A549 (cell line): ENCODE measurements at regions of chr12 and their contacts with region 1.

Region 1: DNA sequence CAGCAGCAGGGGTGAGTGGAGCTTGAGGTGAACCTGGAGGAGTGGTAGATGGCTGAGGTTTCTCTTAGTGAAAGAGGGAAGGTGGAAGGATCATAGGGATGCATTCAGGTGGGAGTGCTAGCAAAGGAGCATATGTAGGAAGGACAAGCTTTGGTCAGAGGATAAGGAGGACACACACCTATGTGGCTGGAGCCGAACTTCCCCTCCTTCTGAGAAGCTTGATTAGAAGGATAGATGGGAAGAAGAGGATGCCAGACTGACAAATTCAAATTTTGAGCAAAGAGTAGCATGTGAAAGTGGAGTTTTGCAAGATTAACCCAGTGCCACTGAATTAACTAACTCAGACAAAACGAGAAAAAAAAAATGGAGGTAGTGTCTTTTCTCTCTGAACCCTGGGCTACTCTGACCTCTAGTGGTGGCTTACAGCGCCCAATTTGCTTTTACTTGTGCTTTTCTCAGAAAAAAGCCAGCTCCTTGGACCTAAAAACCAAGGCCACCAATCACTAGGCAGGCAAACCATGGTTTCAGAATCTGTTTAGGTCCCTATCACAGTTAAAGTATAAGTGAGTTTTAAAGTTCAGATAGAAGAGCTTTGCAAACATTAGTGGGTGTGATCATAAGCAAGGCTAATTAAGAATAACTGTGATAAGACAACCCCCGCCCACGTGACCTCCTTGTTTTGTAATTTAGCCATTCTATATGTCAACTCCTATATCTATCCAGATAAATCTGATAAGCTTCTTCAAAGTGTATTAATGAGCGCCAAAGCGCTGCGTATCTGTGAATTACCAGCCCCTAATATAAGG is 15.5 kb downstream of the EMP1 start:
- DNase-seq: peak; percentile 70 to 78
- ATAC-seq: peak; percentile 55 to 57; a peak in 5 of 6 replicates
- H3K4me3 ChIP-seq: no peak overlapping the region
- H3K27ac ChIP-seq: peak overlapping the region; percentile 71 to 83
- H3K4me1 ChIP-seq: peaks cover 41% of the 10 kb centered on the region
- CTCF ChIP-seq: peak; percentile 96
- EP300 ChIP-seq: no peak
- POLR2A ChIP-seq: no peak
- RAD21 ChIP-seq: peak; percentile 96 to 97

Region 2: DNA sequence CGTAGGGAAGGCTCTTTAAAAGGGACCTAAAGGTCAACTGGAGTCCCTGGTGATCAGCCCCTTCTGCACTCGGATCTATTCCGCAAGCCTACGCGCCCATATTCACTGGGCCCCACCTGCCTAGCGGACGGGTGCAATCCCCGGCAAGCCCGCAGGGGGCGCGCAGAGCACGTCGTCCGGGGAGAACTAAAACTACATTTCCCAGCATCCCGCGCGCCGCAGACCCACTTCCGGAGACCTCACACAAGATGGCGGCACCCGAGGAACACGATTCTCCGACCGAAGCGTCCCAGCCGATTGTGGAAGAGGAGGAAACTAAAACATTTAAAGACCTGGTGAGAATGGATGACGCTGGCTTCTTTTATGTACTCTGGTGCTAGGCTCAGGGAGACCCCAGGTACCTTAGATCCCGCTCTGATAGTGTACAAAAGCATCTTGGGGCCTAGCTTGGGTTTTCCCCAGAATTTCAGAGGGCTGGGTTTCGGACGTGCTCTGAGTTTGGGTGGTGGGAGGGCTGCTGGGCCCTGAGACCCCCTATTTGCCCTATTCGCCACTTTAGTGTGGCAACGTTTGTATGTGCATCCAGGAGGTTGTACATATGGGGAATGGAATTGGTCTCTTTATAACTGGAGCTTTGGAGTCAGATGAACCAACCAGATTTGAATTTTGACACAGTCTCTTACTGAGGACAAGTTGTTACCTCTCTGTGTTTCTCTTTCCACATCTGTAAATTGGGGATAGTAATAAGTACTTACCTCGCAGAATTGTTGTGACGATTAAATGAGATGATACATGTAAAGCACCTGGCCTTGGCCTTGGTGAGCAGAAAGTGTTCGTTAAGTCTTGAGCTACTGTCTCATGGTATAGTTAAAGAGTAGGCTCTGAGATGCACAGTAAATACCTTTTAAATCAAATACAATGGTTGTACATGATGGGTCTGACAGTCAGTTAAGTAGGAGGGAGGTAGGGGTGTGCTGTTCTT is 398.7 kb before region 1 on chr12 and contains the start of gene DDX47:
- CTCF ChIA-PET with region 1: interaction called, 11 read pairs
- POLR2A ChIA-PET with region 1: no interaction called
- DNase-seq: peak; percentile 87 to 95
- ATAC-seq: peak; percentile 93 to 94
- H3K4me3 ChIP-seq: peak within 1 kb of the TSS; percentile 92
- H3K27ac ChIP-seq: peak within 1 kb of the TSS; percentile 90 to 92
- H3K4me1 ChIP-seq: peaks cover 43% of the 10 kb centered on the region
- CTCF ChIP-seq: peak; percentile 81
- EP300 ChIP-seq: no peak
- POLR2A ChIP-seq: peak; percentile 46
- RAD21 ChIP-seq: peak; percentile 60 to 72
- polyA plus RNA-seq, gene DDX47: 118 and 144 TPM in 2 replicates

Region 3: GRCh38 chr12:12999271-12999958 is 212.6 kb before region 1 on chr12:
- CTCF ChIA-PET with region 1: interaction called, 11 read pairs
- POLR2A ChIA-PET with region 1: interaction called, 4 read pairs
- DNase-seq: peak in 1 of 2 experiments; percentile 37
- ATAC-seq: peak; percentile 30 to 31
- H3K4me3 ChIP-seq: peak overlapping the region; percentile 88
- H3K27ac ChIP-seq: peak overlapping the region; percentile 81 to 96
- H3K4me1 ChIP-seq: peaks cover 15% of the 10 kb centered on the region
- CTCF ChIP-seq: no peak
- EP300 ChIP-seq: no peak
- POLR2A ChIP-seq: no peak
- RAD21 ChIP-seq: no peak

Region 4: DNA sequence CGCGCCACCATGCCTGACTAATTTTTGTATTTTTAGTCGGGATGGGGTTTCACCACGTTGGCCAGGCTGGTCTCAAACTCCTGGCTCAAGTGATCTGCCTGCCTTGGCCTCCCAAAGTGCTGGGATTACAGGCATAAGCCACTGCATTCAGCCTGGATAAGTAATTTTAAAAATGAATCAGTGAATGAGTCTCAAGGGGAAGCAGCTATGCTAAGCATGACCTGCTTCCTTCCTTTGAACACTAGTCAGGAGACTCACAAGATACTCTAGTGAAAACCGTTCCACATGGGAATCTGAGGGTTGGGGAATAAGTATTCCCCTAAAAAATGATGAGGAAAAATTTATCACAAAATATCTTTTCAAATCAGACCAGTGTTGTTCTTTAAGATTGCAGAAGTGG is 178.6 kb before region 1 on chr12:
- CTCF ChIA-PET with region 1: interaction called, 119 read pairs
- POLR2A ChIA-PET with region 1: no interaction called
- DNase-seq: no peak
- ATAC-seq: no peak
- H3K4me3 ChIP-seq: no peak overlapping the region
- H3K27ac ChIP-seq: no peak overlapping the region
- H3K4me1 ChIP-seq: no peaks in the 10 kb centered on the region
- CTCF ChIP-seq: no peak
- EP300 ChIP-seq: no peak
- POLR2A ChIP-seq: no peak
- RAD21 ChIP-seq: no peak

Region 5: GRCh38 chr12:13085968-13086686 is 125.9 kb before region 1 on chr12:
- CTCF ChIA-PET with region 1: interaction called, 33 read pairs
- POLR2A ChIA-PET with region 1: no interaction called
- DNase-seq: no peak
- ATAC-seq: no peak
- H3K4me3 ChIP-seq: no peak overlapping the region
- H3K27ac ChIP-seq: no peak overlapping the region
- H3K4me1 ChIP-seq: no peaks in the 10 kb centered on the region
- CTCF ChIP-seq: no peak
- EP300 ChIP-seq: no peak
- POLR2A ChIP-seq: no peak
- RAD21 ChIP-seq: no peak

Region 6: GRCh38 chr12:13187399-13187798 is 24.7 kb before region 1 on chr12:
- CTCF ChIA-PET with region 1: interaction called, 19 read pairs
- POLR2A ChIA-PET with region 1: no interaction called
- DNase-seq: peak; percentile 51 to 65
- ATAC-seq: peak; percentile 82 to 85
- H3K4me3 ChIP-seq: no peak overlapping the region
- H3K27ac ChIP-seq: peak overlapping the region; percentile 19 to 33; a peak in 1 of 6 replicates
- H3K4me1 ChIP-seq: peaks cover 18% of the 10 kb centered on the region
- CTCF ChIP-seq: no peak
- EP300 ChIP-seq: no peak
- POLR2A ChIP-seq: no peak
- RAD21 ChIP-seq: no peak

Region 7: DNA sequence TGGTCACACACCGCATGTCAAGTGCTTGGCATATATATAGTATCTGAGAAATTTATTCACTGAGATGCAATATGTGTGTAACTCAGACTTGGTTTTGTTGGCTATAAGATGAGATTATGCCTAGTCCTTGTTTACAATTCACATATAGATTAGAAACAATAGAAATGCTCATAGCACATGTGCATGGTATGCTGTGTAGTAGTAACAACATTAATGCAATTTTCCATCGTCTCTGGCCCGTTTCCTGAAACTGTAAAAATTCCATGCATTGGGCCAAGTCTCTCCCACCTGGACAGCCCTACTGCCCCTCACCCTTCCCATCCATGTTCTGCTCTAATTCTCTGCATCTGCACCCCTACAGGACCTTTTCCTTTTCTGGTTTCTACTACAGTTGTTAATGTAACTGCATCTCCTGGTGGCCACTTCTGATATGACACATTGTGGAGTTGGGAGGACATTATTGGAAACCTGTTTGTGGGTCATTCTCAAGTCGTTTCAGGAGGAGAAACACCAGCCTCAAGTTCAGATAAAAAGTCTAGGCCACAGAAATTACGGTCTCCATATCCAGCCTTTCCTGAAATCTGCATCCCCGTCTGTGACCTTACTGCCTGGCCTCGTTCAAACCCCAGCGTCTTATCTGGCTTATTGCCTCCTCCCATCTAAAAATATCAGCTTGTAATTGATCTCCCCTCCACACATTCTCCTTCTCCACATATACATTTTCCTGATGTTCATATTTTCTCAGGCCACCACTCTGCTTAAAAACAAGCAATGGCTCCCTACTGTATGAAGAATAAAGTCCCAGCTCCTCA is 22.0 kb after region 1 on chr12:
- CTCF ChIA-PET with region 1: interaction called, 21 read pairs
- POLR2A ChIA-PET with region 1: no interaction called
- DNase-seq: peak; percentile 72 to 73
- ATAC-seq: peak; percentile 80 to 91
- H3K4me3 ChIP-seq: no peak overlapping the region
- H3K27ac ChIP-seq: 0 out of 6 replicates have a peak overlapping the region, but pooled peaks of 1 of the 2 experiments have one; percentile 8
- H3K4me1 ChIP-seq: no peaks in the 10 kb centered on the region
- CTCF ChIP-seq: peak; percentile 84
- EP300 ChIP-seq: no peak
- POLR2A ChIP-seq: no peak
- RAD21 ChIP-seq: peak; percentile 82 to 96